Heart right ventricle (tissue), 16 donors: ENCODE measurements at regions of chr18 and their contacts with region 1.

Region 1: GRCh38 chr18:24947521-24948305 is 404.3 kb downstream of the ZNF521 start:
- DNase-seq: no peak
- ATAC-seq: peak in 6 of 8 donors; percentile 46 to 79 (median 72)
- H3K4me3 ChIP-seq: no peak overlapping the region
- H3K27ac ChIP-seq: peak overlapping the region in 2 of 10 donors; percentile 39 to 45
- H3K4me1 ChIP-seq: no peaks in the 10 kb centered on the region
- H3K27me3 ChIP-seq: no peaks in the 10 kb centered on the region
- CTCF ChIP-seq: no peak

Region 2: DNA sequence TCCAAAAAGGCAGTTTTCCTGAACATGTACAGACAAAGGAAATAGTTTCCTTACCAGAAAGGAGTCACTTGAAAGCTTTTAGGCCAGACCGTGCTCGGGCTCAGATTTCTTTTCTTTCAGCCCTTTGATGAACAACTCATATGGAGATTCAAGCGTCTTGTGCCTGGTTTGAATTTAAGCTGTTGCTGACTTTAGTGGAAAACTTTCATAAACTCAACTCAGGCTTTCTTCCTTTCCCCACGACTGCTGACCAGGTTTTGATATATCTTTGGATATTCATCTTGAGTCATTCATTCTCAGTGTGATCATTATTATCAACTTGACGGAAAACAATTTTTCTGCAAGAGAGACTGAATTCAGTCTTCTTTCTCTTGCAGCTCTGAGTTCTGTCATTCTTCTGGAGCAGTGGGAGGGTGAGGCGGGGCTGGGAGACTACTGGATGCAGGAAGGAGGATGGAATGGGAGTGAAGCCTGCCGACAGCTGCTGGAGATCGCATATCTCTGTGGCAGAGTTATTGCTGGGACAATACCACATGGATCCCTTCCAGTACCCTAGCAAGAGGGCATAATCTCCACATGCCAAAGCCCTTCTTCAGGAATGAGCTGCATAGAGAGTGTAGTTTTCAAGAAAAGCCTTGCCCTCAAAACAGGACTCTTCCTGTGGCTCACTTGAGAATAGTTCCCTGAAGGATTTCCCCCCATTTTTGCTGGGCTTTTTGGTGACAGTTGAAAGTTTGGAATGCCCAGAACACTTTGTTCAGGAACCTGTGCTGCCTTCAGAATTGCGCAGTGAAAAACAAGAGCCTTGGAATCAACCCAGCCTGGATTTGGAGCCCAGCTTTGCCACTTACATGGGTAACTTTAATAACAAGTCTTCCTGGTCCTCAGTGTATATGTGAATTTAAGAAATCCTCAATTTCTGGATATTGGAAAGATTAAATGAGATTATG is 39.9 kb after region 1 on chr18:
- intact Hi-C with region 1: loop called in 1 of 10 experiments (anchors 5 kb)
- DNase-seq: peak; percentile 28 to 44
- ATAC-seq: peak; percentile 69 to 85 (median 76)
- H3K4me3 ChIP-seq: peak overlapping the region in 5 of 10 donors; percentile 13 to 32 (median 23)
- H3K27ac ChIP-seq: peak overlapping the region in 9 of 10 donors; percentile 2 to 73 (median 45)
- H3K4me1 ChIP-seq: peaks cover 3 to 33% (median 15%) of the 10 kb centered on the region in 9 donors
- H3K27me3 ChIP-seq: no peaks in the 10 kb centered on the region
- CTCF ChIP-seq: no peak